HepG2 (cell line): ENCODE measurements at regions of chr2 and their contacts with region 1.

Region 1: DNA sequence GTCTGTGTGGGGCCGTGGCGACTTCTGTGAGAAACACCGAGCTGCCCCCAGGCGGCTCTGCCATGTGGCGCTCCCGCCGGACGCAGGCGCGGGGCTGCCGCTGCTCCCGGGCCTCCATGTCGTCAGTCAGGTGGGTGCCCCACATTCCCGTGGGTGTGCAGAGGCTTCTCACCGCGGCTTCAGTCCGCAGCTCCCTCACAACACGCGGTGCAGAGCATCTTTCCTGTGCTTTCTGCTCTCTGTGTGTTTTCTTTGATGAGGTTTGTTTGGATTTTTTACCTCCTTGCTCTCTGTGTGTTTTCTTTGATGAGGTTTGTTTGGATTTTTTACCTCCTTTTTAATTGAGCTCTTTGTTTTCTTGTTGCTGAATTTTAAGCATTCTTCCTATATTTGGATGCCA is 13.0 kb downstream of the AQP12A start:
- DNase-seq: no peak
- ATAC-seq: no peak; the same call in 2 of the 3 replicates
- H3K4me3 ChIP-seq: no peak overlapping the region
- H3K27ac ChIP-seq: no peak overlapping the region
- H3K4me1 ChIP-seq: no peaks in the 10 kb centered on the region
- H3K27me3 ChIP-seq: peaks cover 33 to 87% of the 10 kb centered on the region in 2 experiments
- CTCF ChIP-seq: no peak
- EP300 ChIP-seq: no peak
- POLR2A ChIP-seq: no peak
- RAD21 ChIP-seq: no peak

Region 2: GRCh38 chr2:240519396-240520129 is 185.1 kb before region 1 on chr2:
- CTCF ChIA-PET with region 1: no interaction called
- POLR2A ChIA-PET with region 1: no interaction called
- in situ Hi-C with region 1: loop called (anchors 10 kb)
- intact Hi-C with region 1: no loop called
- DNase-seq: no peak
- ATAC-seq: no peak
- H3K4me3 ChIP-seq: no peak overlapping the region
- H3K27ac ChIP-seq: no peak overlapping the region
- H3K4me1 ChIP-seq: no peaks in the 10 kb centered on the region
- H3K27me3 ChIP-seq: no peaks in the 10 kb centered on the region
- CTCF ChIP-seq: no peak
- EP300 ChIP-seq: no peak
- POLR2A ChIP-seq: no peak
- RAD21 ChIP-seq: no peak